Upper lobe of right lung (tissue), 1 donor: ENCODE measurements at regions of chr1 and their contacts with region 1.

Region 1: DNA sequence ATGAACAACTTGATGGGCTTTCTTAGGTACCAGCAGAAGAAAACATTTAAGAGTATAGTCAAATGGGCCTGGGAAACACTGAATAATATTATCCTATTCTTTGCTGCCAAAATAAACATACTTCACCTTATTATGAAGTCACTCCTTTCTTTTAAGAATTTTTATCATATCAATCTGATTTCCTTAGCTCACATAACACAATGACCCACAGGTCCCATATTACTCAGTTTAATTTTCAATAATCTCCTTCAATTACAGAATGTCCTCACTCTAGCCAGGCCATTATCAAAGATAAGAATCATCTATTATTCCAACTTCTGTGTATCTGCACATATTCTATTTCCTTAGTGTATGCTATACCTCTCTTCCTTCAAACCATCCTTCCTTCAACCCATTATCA is 63.0 kb downstream of the PIGK start:
- DNase-seq: no peak
- ATAC-seq: no peak
- H3K4me3 ChIP-seq: no peak overlapping the region
- H3K27ac ChIP-seq: no peak overlapping the region
- H3K4me1 ChIP-seq: no peaks in the 10 kb centered on the region
- H3K27me3 ChIP-seq: no peaks in the 10 kb centered on the region
- CTCF ChIP-seq: no peak

Region 2: GRCh38 chr1:77288275-77288674 is 132.1 kb after region 1 on chr1:
- intact Hi-C with region 1: no loop called
- DNase-seq: no peak
- ATAC-seq: no peak
- H3K4me3 ChIP-seq: no peak overlapping the region
- H3K27ac ChIP-seq: no peak overlapping the region
- H3K4me1 ChIP-seq: no peaks in the 10 kb centered on the region
- H3K27me3 ChIP-seq: peaks cover 25% of the 10 kb centered on the region
- CTCF ChIP-seq: no peak

Region 3: DNA sequence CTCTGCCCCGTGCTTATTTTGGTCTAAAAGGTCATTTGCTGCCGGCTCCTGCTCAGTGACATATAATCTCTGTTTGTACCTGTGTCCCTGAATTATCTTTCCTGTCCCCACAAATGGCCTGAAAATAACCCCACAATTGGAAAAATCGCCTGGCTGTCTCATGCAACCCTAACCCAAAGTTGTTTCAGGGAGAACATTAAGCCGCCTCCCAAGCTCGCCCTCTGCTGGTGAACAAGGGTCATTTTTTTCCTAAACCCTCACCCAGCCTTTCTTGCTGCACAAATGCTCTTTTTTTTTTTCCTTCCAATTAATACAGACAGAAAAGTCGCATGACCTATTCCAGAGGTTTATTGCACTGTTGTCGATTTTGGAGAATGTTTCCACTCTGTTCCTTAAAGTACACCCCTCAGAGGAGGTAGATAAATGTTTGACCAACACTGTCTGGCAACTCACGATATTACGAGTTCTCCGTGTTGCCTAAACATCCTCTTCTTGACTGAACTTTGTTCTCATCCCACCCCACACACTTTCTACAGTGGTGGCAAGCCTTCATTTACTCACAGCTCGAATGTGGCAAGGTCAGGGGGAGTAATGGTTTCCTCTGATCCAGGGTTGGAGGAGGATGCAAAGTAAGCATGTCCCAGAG is 377.6 kb after region 1 on chr1:
- intact Hi-C with region 1: loop called (anchors 10 kb)
- DNase-seq: no peak
- ATAC-seq: peak; percentile 75
- H3K4me3 ChIP-seq: no peak overlapping the region
- H3K27ac ChIP-seq: no peak overlapping the region
- H3K4me1 ChIP-seq: peaks cover 3% of the 10 kb centered on the region
- H3K27me3 ChIP-seq: no peaks in the 10 kb centered on the region
- CTCF ChIP-seq: peak; percentile 88